CD4-positive, alpha-beta T cell (primary cell): ENCODE measurements at regions of chr16 and their contacts with region 1.

Region 1: GRCh38 chr16:1519831-1520230 is 13.6 kb upstream of the TMEM204 start:
- DNase-seq: no peak
- ATAC-seq: no peak
- H3K4me3 ChIP-seq: no peak overlapping the region
- H3K4me3 Mint-ChIP-seq: no peak overlapping the region
- H3K27ac ChIP-seq: no peak overlapping the region
- H3K27ac Mint-ChIP-seq: no peak overlapping the region
- H3K4me1 ChIP-seq: peaks cover under 1% of the 10 kb centered on the region
- H3K4me1 Mint-ChIP-seq: no peaks in the 10 kb centered on the region
- H3K27me3 ChIP-seq: no peaks in the 10 kb centered on the region
- H3K27me3 Mint-ChIP-seq: no peaks in the 10 kb centered on the region
- CTCF ChIP-seq: no peak

Region 2: DNA sequence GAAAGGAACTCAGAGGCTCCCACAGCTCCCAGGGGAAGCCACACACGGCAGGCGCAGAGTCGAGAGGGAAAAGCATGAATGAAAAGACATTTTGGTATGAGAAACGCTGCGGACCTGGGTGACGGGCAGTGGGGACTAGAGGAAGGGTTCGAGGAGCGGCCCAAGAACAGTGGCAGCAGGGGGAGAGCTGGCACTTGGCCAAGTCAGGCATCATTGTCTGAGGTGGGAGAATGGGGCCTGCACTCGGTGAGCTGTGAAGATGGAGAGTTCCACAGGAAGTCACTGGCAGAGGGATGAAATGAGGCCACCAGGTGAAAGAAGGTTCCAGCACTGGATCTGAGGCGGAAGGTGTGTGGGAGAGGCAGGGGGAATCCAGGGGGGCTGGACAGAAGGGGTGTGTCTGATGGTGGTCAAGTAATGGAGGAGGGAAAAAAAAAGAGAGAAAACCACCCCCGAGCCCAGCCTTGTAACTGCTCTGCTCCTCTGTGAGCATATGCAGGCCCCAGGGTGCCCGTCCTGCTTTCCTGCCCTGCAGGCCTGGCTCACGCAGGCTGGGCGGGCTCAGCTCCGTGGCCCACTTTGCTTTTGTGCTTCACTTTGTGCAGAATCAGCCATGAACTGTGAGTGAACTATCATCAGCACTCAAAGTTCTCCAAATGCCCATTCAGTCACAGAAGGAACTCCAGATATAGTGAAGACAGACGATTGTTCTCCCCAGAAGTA is 45.4 kb after region 1 on chr16:
- CTCF ChIA-PET with region 1: no interaction called
- POLR2A ChIA-PET with region 1: no interaction called
- intact Hi-C with region 1: loop called in 1 of 2 experiments (anchors 5 kb)
- DNase-seq: no peak
- ATAC-seq: no peak
- H3K4me3 ChIP-seq: no peak overlapping the region
- H3K4me3 Mint-ChIP-seq: no peak overlapping the region
- H3K27ac ChIP-seq: no peak overlapping the region
- H3K27ac Mint-ChIP-seq: peak overlapping the region; percentile 51
- H3K4me1 ChIP-seq: peaks cover 33% of the 10 kb centered on the region
- H3K4me1 Mint-ChIP-seq: peaks cover 22% of the 10 kb centered on the region
- H3K27me3 ChIP-seq: no peaks in the 10 kb centered on the region
- H3K27me3 Mint-ChIP-seq: no peaks in the 10 kb centered on the region
- CTCF ChIP-seq: no peak